ENCODE measurements at regions of chr2 and their contacts with region 1.

Region 1: GRCh38 chr2:27628767-27629709 is at the starts of genes CCDC121 and GPN1:
- DNase-seq: peak; percentile 94
- ATAC-seq: peak; percentile 100
- H3K4me3 ChIP-seq: peak within 1 kb of the TSS; percentile 83 to 98 (median 91)
- H3K4me3 Mint-ChIP-seq: no peak within 1 kb of the TSS
- H3K27ac ChIP-seq: peak within 1 kb of the TSS; percentile 70 to 83
- H3K27ac Mint-ChIP-seq: peak within 1 kb of the TSS; percentile 51
- H3K4me1 ChIP-seq: peaks cover 10 to 17% of the 10 kb centered on the region in 2 donors
- H3K4me1 Mint-ChIP-seq: peaks cover 24% of the 10 kb centered on the region
- H3K27me3 ChIP-seq: no peaks in the 10 kb centered on the region
- H3K27me3 Mint-ChIP-seq: no peaks in the 10 kb centered on the region
- CTCF ChIP-seq: no peak
- total RNA-seq, gene CCDC121: 1.3 and 2.2 TPM in 2 replicates
- total RNA-seq, gene GPN1: 26.0 and 27.8 TPM in 2 replicates

Region 2: GRCh38 chr2:27380626-27381545 is 248.2 kb before region 1 on chr2 and contains the start of gene ZNF513:
- CTCF ChIA-PET with region 1: no interaction called
- POLR2A ChIA-PET with region 1: no interaction called
- intact Hi-C with region 1: loop called (anchors 1 kb)
- DNase-seq: peak; percentile 92
- ATAC-seq: peak; percentile 94
- H3K4me3 ChIP-seq: peak within 1 kb of the TSS; percentile 40 to 66 (median 63)
- H3K4me3 Mint-ChIP-seq: peak within 1 kb of the TSS; percentile 94
- H3K27ac ChIP-seq: peak within 1 kb of the TSS; percentile 56 to 94
- H3K27ac Mint-ChIP-seq: peak within 1 kb of the TSS; percentile 96
- H3K4me1 ChIP-seq: peaks cover 16 to 20% of the 10 kb centered on the region in 2 donors
- H3K4me1 Mint-ChIP-seq: peaks cover 30% of the 10 kb centered on the region
- H3K27me3 ChIP-seq: no peaks in the 10 kb centered on the region
- H3K27me3 Mint-ChIP-seq: no peaks in the 10 kb centered on the region
- CTCF ChIP-seq: no peak
- total RNA-seq, gene ZNF513: 29.0 and 31.7 TPM in 2 replicates

Region 3: GRCh38 chr2:27537287-27537686 is 91.8 kb before region 1 on chr2:
- CTCF ChIA-PET with region 1: no interaction called
- POLR2A ChIA-PET with region 1: no interaction called
- intact Hi-C with region 1: no loop called
- DNase-seq: no peak
- ATAC-seq: no peak
- H3K4me3 ChIP-seq: no peak overlapping the region
- H3K4me3 Mint-ChIP-seq: no peak overlapping the region
- H3K27ac ChIP-seq: no peak overlapping the region
- H3K27ac Mint-ChIP-seq: no peak overlapping the region
- H3K4me1 ChIP-seq: no peaks in the 10 kb centered on the region
- H3K4me1 Mint-ChIP-seq: no peaks in the 10 kb centered on the region
- H3K27me3 ChIP-seq: peaks cover 0 to 3% (median 0%) of the 10 kb centered on the region in 4 experiments
- H3K27me3 Mint-ChIP-seq: peaks cover 29% of the 10 kb centered on the region
- CTCF ChIP-seq: no peak

Region 4: GRCh38 chr2:27582695-27583389 is 46.2 kb before region 1 on chr2 and contains the start of gene ZNF512:
- CTCF ChIA-PET with region 1: no interaction called
- POLR2A ChIA-PET with region 1: interaction called, 4 read pairs
- intact Hi-C with region 1: loop called (anchors 1 kb)
- DNase-seq: peak; percentile 93
- ATAC-seq: peak; percentile 94
- H3K4me3 ChIP-seq: peak within 1 kb of the TSS; percentile 66 to 98 (median 80)
- H3K4me3 Mint-ChIP-seq: peak within 1 kb of the TSS; percentile 96
- H3K27ac ChIP-seq: peak within 1 kb of the TSS; percentile 70 to 72
- H3K27ac Mint-ChIP-seq: peak within 1 kb of the TSS; percentile 96
- H3K4me1 ChIP-seq: peaks cover 17 to 29% of the 10 kb centered on the region in 2 donors
- H3K4me1 Mint-ChIP-seq: peaks cover 40% of the 10 kb centered on the region
- H3K27me3 ChIP-seq: no peaks in the 10 kb centered on the region
- H3K27me3 Mint-ChIP-seq: peaks cover 1% of the 10 kb centered on the region
- CTCF ChIP-seq: no peak
- total RNA-seq, gene ZNF512: 65.2 and 72.3 TPM in 2 replicates

Region 5: GRCh38 chr2:27663463-27664249 is 34.6 kb after region 1 on chr2 and contains the starts of genes SLC4A1AP and SUPT7L:
- CTCF ChIA-PET with region 1: no interaction called
- POLR2A ChIA-PET with region 1: interaction called, 6 read pairs
- intact Hi-C with region 1: loop called (anchors 1 kb)
- DNase-seq: peak; percentile 94
- ATAC-seq: peak; percentile 80
- H3K4me3 ChIP-seq: peak within 1 kb of the TSS; percentile 75 to 100 (median 97)
- H3K4me3 Mint-ChIP-seq: peak within 1 kb of the TSS; percentile 99
- H3K27ac ChIP-seq: peak within 1 kb of the TSS; percentile 75 to 99
- H3K27ac Mint-ChIP-seq: peak within 1 kb of the TSS; percentile 99
- H3K4me1 ChIP-seq: peaks cover 19 to 23% of the 10 kb centered on the region in 2 donors
- H3K4me1 Mint-ChIP-seq: peaks cover 42% of the 10 kb centered on the region
- H3K27me3 ChIP-seq: no peaks in the 10 kb centered on the region
- H3K27me3 Mint-ChIP-seq: no peaks in the 10 kb centered on the region
- CTCF ChIP-seq: no peak
- total RNA-seq, gene SLC4A1AP: 23.1 and 25.6 TPM in 2 replicates
- total RNA-seq, gene SUPT7L: 40.2 and 40.7 TPM in 2 replicates